Left cardiac atrium (tissue), 4 donors: ENCODE measurements at regions of chr12 and their contacts with region 1.

Region 1: DNA sequence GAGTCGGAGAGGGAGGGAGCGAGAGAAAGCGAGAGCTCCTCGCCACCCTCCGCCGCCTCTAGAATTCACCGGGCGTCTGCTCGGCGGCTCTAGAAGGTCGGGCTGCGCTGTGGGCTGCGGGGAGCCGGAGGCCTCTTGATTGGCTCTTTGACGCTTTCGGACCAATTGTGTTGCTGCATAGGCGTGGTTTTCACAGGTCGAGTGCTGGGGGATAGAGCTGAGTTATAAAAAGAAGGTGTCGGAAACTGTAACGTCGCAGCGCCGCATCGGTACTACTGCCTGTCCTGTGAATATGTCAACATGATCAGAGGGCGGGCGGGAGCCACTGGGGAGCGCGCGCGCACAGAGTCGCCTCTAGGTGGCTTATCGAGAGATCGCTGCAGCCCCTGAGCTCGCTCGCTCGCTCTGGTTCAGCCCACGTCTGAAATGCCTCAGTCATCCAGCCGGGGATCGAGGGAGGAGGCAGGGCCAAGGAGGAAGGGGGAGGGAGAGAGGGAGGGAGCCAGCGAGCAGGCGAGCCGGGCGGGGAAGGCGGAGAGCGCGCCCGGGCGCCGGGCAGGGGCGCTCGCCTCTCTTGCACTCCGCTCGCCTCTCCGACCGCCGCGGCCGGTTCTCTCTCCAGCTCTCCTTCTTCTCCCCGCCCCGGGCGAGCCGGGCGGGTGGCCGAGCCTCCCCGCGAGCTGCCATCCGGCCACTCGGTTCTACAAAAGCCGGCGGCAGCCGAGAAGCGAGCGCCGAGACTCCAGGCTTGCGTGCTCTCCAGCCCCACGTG is at the start of gene TBX3:
- DNase-seq: peak; percentile 92
- ATAC-seq: peak; percentile 92 to 95
- total RNA-seq, gene TBX3: 7.7 to 14.3 TPM

Region 2: GRCh38 chr12:114799574-114800487 is 115.5 kb after region 1 on chr12:
- intact Hi-C with region 1: loop called in 1 of 2 experiments (anchors 5 kb)
- DNase-seq: peak; percentile 85
- ATAC-seq: peak; percentile 96 to 99

Region 3: GRCh38 chr12:115185506-115185905 is 501.2 kb after region 1 on chr12:
- intact Hi-C with region 1: no loop called
- DNase-seq: no peak
- ATAC-seq: peak in 1 of 2 donors; percentile 61

Region 4: DNA sequence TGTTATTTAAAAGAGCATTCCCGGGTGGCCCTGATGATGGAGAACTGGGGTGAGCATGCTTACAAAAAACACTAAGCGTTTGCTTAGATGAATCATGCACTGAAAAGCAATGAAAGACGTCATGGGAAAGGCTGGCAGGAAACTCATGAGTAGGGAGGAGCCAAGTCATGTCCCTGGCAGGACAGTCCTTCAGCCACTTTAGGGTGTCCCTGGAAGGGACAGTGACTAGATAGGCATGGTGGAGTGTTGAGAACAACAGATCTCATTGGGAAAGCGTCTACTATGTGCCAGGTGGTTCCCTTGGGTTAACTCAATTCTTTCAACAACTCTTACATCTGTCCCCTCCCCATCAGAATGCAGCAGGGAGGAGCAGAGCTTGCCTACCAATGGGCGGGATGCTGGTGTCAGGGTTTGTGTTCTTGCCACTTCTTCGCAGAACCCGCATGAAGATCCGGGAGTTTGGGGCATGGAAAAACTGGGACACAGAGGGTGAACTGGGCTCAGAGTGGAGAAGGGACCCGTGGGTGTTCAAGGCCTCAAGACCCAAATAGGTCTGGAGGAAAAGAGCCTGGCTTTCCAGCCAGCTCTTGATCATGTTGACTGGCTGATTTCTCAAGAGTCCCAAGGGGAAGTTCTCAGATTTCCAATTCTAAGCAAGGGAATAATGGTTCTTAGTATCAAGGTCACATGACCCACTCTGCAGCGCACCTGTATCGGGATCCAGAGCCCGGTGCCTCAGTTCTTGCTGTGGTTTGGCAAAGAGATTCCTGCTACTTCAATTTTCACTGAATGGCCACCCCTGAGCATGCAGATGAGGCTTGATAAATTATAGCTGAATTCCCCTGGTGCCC is 653.6 kb after region 1 on chr12:
- intact Hi-C with region 1: loop called in 1 of 2 experiments (anchors 10 kb)
- DNase-seq: peak; percentile 60
- ATAC-seq: peak; percentile 72 to 85